Left ventricle myocardium superior (tissue), 1 donor: ENCODE measurements at regions of chr4 and their contacts with region 1.

Region 1: DNA sequence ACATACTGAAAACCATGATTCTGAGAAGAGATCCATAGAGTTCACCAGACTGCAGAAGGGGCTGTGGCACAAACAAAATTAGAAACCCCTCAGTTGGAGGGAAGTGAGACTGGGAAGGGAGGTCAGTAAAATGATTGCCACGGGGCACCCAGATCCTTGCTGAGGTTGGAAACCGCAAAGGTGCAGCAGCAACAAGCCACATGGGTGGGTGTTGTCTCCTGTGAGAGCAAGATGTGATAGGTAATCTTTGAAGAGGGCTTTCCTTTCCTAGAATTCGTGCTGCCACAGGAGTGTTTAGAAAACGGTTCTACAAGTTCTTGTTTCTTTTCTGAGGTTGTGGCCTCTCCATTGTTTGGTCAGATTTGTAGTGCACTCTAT is 85.5 kb downstream of the NFKB1 start:
- DNase-seq: no peak
- ATAC-seq: no peak

Region 2: GRCh38 chr4:102525097-102525496 is 61.5 kb before region 1 on chr4:
- intact Hi-C with region 1: loop called (anchors 2 kb)
- DNase-seq: no peak
- ATAC-seq: no peak